ENCODE measurements at regions of chr11 and their contacts with region 1.

Region 1: GRCh38 chr11:12888525-12889158 is 120.5 kb upstream of the RASSF10 start:
- DNase-seq: peak; percentile 91 to 95
- ATAC-seq: peak; percentile 87
- H3K4me3 ChIP-seq: no peak overlapping the region
- H3K27ac ChIP-seq: peak overlapping the region; percentile 17 to 61
- H3K4me1 ChIP-seq: no peaks in the 10 kb centered on the region
- H3K27me3 ChIP-seq: no peaks in the 10 kb centered on the region

Region 2: DNA sequence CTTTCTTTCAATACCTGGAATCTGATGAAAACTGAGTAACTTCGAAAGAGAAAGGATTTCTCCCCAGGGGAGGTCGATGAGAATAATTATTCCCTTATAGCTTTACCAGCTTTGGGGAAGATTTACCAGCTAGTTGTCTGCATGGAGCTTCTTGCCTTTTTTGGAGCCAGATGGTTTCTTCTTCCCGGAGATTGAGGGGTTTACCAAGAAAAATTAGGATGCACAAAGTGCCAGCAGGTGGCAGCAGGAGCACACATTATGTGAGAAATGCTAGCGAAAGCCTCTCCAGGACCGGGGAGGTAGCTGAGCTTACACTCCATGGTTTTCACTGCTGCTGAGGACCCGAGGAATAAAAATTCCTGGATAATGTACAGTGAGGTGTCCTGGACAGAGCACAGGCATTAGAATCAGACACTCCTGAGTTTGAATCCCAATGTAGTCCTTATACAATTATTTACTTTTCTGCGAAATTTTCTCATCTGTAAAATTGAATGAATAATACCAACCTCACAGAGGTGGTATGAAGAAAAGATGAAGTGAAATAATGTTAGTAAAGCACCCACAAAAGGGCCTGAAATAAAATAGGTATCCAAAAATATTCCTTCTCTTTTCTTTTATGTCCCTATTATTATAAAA is 557.3 kb before region 1 on chr11:
- intact Hi-C with region 1: loop called (anchors 2 kb)
- DNase-seq: peak; percentile 87 to 92
- ATAC-seq: peak; percentile 89
- H3K4me3 ChIP-seq: no peak overlapping the region
- H3K27ac ChIP-seq: no peak overlapping the region
- H3K4me1 ChIP-seq: no peaks in the 10 kb centered on the region
- H3K27me3 ChIP-seq: no peaks in the 10 kb centered on the region

Region 3: DNA sequence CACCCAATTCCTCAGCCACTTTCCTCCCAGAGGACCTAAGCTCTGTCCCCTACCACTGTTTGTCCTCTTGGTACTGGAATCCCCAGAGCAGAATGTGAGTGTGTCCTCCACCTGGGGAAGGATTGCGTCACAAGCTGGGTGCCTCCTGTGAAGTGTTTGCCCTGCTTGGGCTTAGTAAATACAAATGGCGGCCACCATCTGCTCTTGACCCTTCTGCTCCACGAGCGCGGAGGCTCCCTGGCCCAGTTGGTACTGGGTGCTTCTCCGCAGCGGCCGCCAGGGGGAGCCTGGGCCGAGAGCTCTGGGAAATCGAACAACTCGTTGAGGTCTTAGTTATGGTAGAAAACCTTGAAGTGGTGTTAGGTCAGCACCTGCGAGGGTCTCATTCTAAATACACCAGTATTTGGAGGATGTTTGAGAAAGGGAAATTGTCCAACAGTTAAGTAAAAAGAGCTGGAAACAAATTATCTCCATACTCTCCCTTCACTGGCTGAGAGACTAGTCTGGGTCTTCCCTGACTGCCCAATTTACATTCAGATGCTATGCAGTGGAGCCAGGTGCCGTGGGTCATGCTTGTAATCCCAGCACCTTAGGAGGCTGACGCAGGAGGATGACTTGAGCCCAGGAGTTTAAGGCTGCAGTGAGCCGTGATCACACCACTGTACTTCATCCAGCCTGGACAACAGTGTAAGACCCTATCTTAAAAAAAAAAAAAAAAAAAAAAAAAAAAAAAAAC is 289.1 kb before region 1 on chr11:
- intact Hi-C with region 1: loop called (anchors 2 to 5 kb)
- DNase-seq: peak; percentile 66 to 81
- ATAC-seq: peak; percentile 79
- H3K4me3 ChIP-seq: no peak overlapping the region
- H3K27ac ChIP-seq: no peak overlapping the region
- H3K4me1 ChIP-seq: no peaks in the 10 kb centered on the region
- H3K27me3 ChIP-seq: no peaks in the 10 kb centered on the region

Region 4: DNA sequence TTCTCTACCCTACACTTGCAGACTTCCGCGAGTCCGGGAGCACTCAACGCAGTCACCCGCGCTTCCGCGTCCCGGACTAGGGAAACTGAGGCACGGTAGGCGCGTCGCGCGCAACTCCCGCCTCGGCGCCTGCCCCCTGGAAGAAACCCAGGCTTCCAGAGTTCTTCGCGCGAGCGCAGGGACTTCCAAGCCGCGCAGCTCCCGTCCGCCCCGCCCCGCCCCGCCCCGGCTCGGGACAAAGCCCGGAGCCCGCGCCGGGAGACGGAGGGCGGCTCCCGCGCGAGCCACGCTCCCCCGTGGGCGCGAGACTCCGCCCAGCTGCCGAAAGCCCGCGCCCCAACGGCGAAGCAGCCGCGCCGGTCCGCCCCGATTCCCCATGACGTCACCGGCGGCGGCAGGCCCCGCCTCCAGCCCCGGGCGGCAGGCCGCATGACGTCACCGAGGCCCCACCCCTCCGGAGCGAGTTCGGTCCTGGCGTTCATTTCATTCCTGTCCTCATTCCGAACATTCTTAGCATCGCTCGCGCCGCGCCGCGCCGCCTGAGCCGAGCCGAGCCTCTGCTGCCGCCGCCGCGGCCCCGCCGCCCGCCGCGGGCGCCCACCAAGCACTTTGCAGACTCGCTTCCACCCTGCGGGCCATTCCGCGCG is 214.6 kb before region 1 on chr11 and contains the start of gene TEAD1:
- intact Hi-C with region 1: loop called (anchors 2 to 10 kb)
- DNase-seq: peak; percentile 96 to 99
- ATAC-seq: peak; percentile 96
- H3K4me3 ChIP-seq: peak within 1 kb of the TSS; percentile 92 to 99
- H3K27ac ChIP-seq: peak within 1 kb of the TSS; percentile 71 to 88
- H3K4me1 ChIP-seq: peaks cover 0 to 2% of the 10 kb centered on the region in 2 donors
- H3K27me3 ChIP-seq: no peaks in the 10 kb centered on the region
- total RNA-seq, gene TEAD1: 56.5 to 64.9 TPM

Region 5: GRCh38 chr11:12827929-12828812 is 60.5 kb before region 1 on chr11:
- intact Hi-C with region 1: loop called in 1 of 2 experiments (anchors 5 kb)
- DNase-seq: no peak
- ATAC-seq: peak; percentile 69
- H3K4me3 ChIP-seq: peak overlapping the region; percentile 74 to 79
- H3K27ac ChIP-seq: peak overlapping the region in 1 of 2 donors; percentile 45
- H3K4me1 ChIP-seq: no peaks in the 10 kb centered on the region
- H3K27me3 ChIP-seq: no peaks in the 10 kb centered on the region